GM18951 (cell line): ENCODE measurements at regions of chr7 and their contacts with region 1.

Region 1: GRCh38 chr7:116984917-116985316 is 31.6 kb downstream of the ST7 start:
- POLR2A ChIP-seq: no peak

Region 2: GRCh38 chr7:116726713-116727431 is 258.0 kb before region 1 on chr7:
- in situ Hi-C with region 1: no loop called
- POLR2A ChIP-seq: no peak

Region 3: DNA sequence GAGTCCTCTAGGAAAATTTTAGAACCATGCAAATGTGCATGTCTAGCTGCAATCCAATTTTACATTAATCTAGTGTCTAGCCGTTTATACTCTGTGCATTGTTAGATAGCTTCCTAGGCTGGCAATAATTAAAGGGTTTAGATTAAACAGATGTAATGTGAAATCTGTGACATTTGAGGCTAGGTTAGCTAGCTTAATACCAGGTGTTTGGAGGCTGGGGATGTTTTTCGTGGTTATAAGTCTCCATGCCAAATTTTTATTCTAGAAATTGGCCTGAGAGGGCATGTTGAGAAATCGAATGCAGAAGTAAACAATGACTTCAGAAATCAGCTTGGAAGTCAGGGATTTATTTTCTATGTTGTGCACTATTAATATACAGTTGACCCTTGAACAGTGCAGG is 62.6 kb after region 1 on chr7:
- in situ Hi-C with region 1: no loop called
- POLR2A ChIP-seq: no peak

Region 4: GRCh38 chr7:117119192-117119924 is 134.4 kb after region 1 on chr7:
- in situ Hi-C with region 1: loop called (anchors 5 kb)
- POLR2A ChIP-seq: no peak